ENCODE measurements at regions of chr1 and their contacts with region 1.

Region 1: DNA sequence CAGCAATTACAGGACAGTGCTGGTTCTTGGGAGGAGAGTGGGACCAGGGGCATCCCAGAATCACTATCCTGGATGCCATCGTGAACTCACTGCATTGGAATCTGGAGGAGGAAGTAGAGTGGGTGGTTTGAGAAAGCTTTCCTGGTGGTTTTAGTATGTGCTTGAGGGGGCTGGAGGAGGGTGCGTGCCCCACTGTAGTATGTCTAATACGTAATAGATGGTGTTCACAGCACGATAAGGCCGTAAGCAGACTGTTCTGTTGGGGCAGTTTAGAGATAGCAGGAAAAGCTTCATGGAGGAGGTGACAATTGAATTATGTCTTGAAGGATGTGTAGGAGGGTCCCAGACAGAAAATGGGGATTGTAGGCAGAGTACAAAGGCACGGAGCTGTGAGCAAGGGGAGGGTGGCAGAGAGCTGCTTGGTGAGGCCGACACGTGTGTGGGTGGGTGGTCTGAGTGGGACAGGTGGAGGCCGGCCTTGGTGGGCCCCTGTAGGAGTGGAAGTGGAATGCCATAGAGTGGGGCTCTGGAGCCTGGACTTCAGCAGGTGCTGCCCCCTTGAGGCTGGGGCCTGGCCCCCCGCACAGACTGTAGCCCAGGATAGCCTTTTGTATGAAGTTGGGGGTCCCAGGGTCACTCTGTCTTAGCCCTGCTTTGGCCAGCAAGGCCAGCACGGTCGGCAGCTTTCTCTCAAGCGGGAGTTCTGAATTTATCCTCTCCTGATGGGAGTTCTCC is 37.0 kb downstream of the IL6R start:
- DNase-seq: no peak
- H3K4me3 Mint-ChIP-seq: no peak overlapping the region
- H3K27ac Mint-ChIP-seq: peak overlapping the region; percentile 61
- H3K4me1 Mint-ChIP-seq: peaks cover 71% of the 10 kb centered on the region
- H3K27me3 Mint-ChIP-seq: no peaks in the 10 kb centered on the region

Region 2: DNA sequence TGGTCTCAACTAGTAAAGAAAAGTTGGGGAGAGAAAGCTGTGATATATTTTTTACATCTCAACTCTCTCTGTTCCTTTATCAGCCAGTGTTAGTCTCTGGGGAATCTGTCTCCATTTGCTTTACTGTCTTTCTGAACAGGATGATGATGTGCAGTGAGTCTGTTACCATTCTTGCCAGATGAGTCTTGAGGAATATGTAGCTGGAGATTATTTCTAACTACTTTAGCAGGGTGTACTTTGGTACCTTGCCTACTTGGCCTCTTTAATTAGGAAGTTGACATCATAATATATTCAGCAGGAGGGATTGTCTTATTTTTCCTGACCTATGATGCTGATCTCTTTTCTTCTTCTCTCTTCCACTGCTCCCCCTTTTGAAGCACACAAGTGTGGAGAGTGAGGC is 185.5 kb before region 1 on chr1:
- CTCF ChIA-PET with region 1: no interaction called
- POLR2A ChIA-PET with region 1: no interaction called
- intact Hi-C with region 1: no loop called
- DNase-seq: no peak
- H3K4me3 Mint-ChIP-seq: no peak overlapping the region
- H3K27ac Mint-ChIP-seq: no peak overlapping the region
- H3K4me1 Mint-ChIP-seq: no peaks in the 10 kb centered on the region
- H3K27me3 Mint-ChIP-seq: no peaks in the 10 kb centered on the region

Region 3: DNA sequence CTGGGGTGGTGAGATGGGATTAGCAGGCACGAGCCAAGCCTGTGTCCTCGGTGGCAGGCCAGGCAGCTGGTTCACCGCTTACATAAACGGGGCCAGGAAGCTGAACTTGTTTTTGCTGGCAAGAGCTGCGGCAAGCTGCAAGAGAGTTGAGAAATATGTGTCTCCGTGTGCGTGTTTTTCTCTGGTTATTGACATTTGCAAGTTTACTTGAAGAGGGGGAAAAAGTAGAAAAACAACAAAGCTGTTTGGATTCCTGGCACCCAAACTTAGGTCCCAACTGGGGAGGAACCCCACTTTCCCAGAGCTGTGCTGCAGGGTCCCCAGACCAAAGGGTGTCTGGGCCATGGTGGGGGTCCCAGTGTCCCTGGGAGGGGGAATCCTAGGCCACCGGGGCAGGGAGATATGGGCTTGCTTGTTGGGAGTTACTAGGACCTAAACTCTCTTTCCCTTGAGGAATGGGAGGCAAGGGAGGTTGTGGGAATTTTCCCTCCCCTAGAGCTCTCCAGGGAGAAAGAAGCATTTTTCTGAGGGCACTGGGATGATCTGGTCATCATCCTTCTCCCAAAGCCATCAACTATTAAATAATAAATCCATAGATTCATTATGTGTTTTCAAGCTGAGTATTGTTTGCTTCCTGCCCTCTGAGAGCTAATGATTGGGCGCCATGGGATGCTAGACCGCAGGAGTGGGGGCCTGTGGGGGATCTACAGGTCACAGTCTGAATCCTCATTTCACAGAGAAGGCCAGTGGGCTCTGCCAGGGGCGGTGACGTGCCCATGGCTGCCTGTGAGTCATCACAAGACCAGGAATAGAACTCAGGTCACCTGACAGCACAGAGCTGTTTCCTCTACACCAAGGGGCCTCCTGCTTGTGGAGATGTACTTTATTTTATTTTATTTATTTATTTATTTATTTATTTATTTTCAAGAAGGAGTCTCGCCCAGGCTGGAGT is 22.3 kb before region 1 on chr1:
- CTCF ChIA-PET with region 1: interaction called, 7 read pairs
- POLR2A ChIA-PET with region 1: interaction called, 3 read pairs
- intact Hi-C with region 1: loop called (anchors 1 kb)
- DNase-seq: peak; percentile 88
- H3K4me3 Mint-ChIP-seq: peak overlapping the region; percentile 54
- H3K27ac Mint-ChIP-seq: peak overlapping the region; percentile 89
- H3K4me1 Mint-ChIP-seq: peaks cover 87% of the 10 kb centered on the region
- H3K27me3 Mint-ChIP-seq: no peaks in the 10 kb centered on the region